Transverse colon (tissue), 4 donors: ENCODE measurements at regions of chr11 and their contacts with region 1.

Region 1: GRCh38 chr11:110081462-110082376 is 11.5 kb upstream of the ZC3H12C start:
- DNase-seq: no peak
- H3K4me3 ChIP-seq: no peak overlapping the region
- H3K27ac ChIP-seq: no peak overlapping the region
- H3K4me1 ChIP-seq: peaks cover 0 to 23% (median 9%) of the 10 kb centered on the region in 4 donors
- H3K27me3 ChIP-seq: no peaks in the 10 kb centered on the region
- CTCF ChIP-seq: no peak
- EP300 ChIP-seq: no peak
- POLR2A ChIP-seq: no peak

Region 2: DNA sequence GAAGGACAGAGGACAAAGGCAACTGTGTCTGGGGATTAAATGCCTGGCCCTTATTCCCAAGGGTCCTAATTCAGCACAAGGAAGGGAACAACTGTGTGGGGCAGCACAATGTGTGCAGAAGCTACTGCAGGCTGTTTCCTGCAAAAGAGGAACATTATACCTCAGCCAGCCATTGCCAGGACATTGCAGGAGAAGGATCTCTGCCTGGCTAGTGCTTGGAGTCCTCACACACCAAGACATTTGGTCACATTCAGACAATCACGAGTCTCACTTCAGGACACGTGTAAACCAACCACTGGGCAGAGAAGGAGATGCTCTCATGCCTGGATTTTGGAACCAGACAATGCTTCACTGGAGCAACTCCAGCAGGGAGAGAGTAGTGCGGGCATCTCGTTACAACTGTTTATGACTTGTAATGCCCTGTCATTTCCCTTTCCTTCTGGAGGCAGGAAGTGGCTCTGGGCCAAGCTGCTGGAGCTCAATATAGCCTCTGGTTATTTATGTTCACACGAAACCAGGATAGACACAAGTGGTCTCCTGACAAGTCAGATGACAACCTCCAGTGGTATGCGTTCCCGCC is 12.5 kb before region 1 on chr11:
- in situ Hi-C with region 1: no loop called
- intact Hi-C with region 1: loop called (anchors 1 kb)
- DNase-seq: peak; percentile 57
- H3K4me3 ChIP-seq: no peak overlapping the region
- H3K27ac ChIP-seq: peak overlapping the region in 3 of 4 donors; percentile 11 to 41 (median 28)
- H3K4me1 ChIP-seq: peaks cover 0 to 12% (median 2%) of the 10 kb centered on the region in 4 donors
- H3K27me3 ChIP-seq: no peaks in the 10 kb centered on the region
- CTCF ChIP-seq: no peak
- EP300 ChIP-seq: no peak
- POLR2A ChIP-seq: no peak